Psoas muscle (tissue), 8 donors: ENCODE measurements at regions of chr17 and their contacts with region 1.

Region 1: DNA sequence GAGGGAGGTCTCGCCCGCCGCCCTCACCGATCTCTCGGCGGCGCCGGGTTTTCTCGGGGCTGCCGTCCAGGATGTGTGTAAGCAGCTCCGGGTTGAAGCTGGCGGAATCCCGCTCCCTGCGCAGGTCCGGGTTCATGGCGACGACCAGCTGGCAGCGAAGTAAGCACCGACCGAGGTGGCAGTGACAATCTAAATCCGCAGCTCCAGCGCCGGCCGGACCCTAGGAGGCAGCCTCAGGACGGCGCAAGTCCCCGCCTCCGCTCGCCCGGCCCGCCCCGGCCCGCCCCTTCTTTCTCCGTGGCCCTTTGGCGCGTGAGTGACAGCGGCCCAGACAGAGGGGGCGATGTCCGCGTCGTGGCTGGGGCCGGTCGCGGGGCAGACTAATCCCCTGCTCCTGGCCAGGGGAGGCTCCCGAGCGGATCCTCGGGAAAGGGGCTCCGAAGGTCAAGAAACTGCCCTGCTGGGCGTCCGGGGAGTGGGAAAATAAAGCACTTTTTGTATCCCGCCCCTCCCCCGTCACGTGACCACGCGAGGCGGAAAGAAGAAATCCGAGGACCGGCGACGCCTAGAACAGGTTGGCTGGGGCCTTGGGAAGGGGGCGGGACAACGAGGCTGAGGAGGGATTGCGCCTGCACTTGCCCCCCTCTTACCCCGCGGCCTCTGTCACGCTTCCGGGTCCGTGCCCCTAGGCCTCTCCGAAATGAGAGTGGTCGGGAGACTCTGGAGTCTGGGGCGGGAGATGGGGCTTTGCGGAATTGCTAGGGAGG is at the starts of genes ACOX1 and TEN1:
- DNase-seq: peak; percentile 98 to 99
- ATAC-seq: peak; percentile 95 to 98 (median 96)
- H3K4me3 ChIP-seq: peak within 1 kb of the TSS; percentile 85
- H3K27ac ChIP-seq: peak within 1 kb of the TSS; percentile 94
- H3K4me1 ChIP-seq: peaks cover 31% of the 10 kb centered on the region
- H3K27me3 ChIP-seq: no peaks in the 10 kb centered on the region
- CTCF ChIP-seq: no peak
- total RNA-seq, gene ACOX1: 58.1 to 78.8 (median 64.4) TPM
- total RNA-seq, gene TEN1: 3.4 to 8.8 (median 7.0) TPM

Region 2: GRCh38 chr17:75940724-75941441 is 38.2 kb before region 1 on chr17 and contains the start of gene FBF1:
- intact Hi-C with region 1: loop called (anchors 2 to 5 kb)
- DNase-seq: peak; percentile 95 to 98
- ATAC-seq: peak; percentile 97 to 99 (median 98)
- H3K4me3 ChIP-seq: peak within 1 kb of the TSS; percentile 79
- H3K27ac ChIP-seq: peak within 1 kb of the TSS; percentile 63
- H3K4me1 ChIP-seq: peaks cover 5% of the 10 kb centered on the region
- H3K27me3 ChIP-seq: no peaks in the 10 kb centered on the region
- CTCF ChIP-seq: no peak
- total RNA-seq, gene FBF1: 1.8 to 5.9 (median 3.7) TPM